A549 (cell line): ENCODE measurements at regions of chr15 and their contacts with region 1.

Region 1: GRCh38 chr15:22224241-22224671 is 143.9 kb downstream of the OR4M2 start:
- DNase-seq: peak in 1 of 2 experiments; percentile 78
- ATAC-seq: peak; percentile 41 to 49
- H3K4me3 ChIP-seq: no peak overlapping the region
- H3K27ac ChIP-seq: no peak overlapping the region
- H3K4me1 ChIP-seq: no peaks in the 10 kb centered on the region
- CTCF ChIP-seq: peak; percentile 43
- EP300 ChIP-seq: no peak
- POLR2A ChIP-seq: no peak
- RAD21 ChIP-seq: peak; percentile 59 to 62

Region 2: DNA sequence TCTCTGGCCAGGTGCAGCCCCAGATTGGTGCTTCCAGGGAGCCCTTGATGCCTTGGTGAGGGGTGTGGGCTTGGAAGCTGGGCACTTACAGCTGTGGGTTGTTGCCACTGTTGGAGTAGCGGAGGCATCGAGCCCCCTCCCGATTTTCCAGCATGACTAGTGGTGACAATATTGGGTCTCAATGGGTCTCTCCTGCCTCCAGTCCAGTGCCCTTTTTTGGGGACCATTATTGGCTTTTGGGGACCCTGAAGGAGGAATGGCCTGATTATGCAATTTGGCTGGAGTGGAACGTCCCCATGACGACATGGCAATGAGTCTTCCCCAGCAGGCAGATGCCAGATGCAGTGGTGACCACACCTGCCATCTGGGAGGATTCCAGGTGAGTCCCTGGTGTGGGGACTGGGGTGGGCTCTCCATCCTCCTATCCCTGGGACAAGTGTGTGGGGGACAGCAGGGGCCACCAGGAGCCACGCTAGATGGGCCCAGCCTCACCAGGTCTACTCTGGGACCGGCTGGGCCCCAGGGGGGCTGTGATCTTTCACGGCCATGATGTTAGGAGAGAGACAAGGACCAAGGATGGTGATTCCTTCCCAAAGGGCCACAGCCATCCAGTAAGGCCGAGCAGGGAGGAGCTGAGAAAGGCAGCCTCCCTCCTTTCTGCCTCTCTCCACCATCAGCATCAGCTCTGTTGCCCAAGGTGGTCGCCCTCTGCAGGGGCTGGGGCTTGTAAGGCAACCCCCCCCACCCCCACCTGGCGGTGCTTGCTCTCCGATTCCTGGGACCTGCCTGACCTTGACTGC is 1879.5 kb before region 1 on chr15:
- CTCF ChIA-PET with region 1: interaction called, 12 read pairs
- POLR2A ChIA-PET with region 1: no interaction called
- DNase-seq: peak in 1 of 2 experiments; percentile 6
- ATAC-seq: no peak
- H3K4me3 ChIP-seq: no peak overlapping the region
- H3K27ac ChIP-seq: no peak overlapping the region
- H3K4me1 ChIP-seq: no peaks in the 10 kb centered on the region
- CTCF ChIP-seq: no peak
- EP300 ChIP-seq: no peak
- POLR2A ChIP-seq: no peak
- RAD21 ChIP-seq: no peak

Region 3: DNA sequence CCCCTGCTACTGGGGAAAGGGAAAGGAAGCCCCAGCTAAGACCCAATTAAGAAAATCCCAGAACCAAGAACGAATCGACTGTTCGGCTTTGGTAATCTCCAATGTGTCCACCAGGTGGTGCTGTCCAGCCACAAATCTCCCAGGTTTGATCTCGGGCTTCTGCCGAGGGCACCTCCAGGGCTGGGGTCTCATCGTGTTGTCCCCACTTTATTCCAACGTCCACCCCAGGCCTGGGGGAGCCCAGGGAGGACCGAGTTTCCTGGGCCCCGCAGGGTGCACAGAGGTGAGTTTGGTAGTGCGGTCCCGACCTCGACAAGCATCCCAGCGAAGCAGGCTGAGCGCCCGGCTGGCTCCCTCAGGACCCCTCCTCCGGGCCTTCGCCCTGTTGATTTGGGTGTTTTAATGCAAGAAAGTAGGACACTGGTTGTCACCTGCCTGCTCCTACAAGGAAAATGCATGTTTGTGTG is 1867.8 kb before region 1 on chr15:
- CTCF ChIA-PET with region 1: interaction called, 136 read pairs
- POLR2A ChIA-PET with region 1: no interaction called
- DNase-seq: peak; percentile 77 to 80
- ATAC-seq: peak; percentile 30 to 84
- H3K4me3 ChIP-seq: no peak overlapping the region
- H3K27ac ChIP-seq: no peak overlapping the region
- H3K4me1 ChIP-seq: no peaks in the 10 kb centered on the region
- CTCF ChIP-seq: peak; percentile 90
- EP300 ChIP-seq: no peak
- POLR2A ChIP-seq: no peak
- RAD21 ChIP-seq: peak; percentile 97 to 98

Region 4: GRCh38 chr15:22239806-22240180 is 15.5 kb after region 1 on chr15:
- CTCF ChIA-PET with region 1: interaction called, 67 read pairs
- POLR2A ChIA-PET with region 1: no interaction called
- DNase-seq: no peak
- ATAC-seq: no peak
- H3K4me3 ChIP-seq: no peak overlapping the region
- H3K27ac ChIP-seq: no peak overlapping the region
- H3K4me1 ChIP-seq: peaks cover 13% of the 10 kb centered on the region; the same call in 2 of the 3 replicates
- CTCF ChIP-seq: no peak
- EP300 ChIP-seq: no peak
- POLR2A ChIP-seq: no peak
- RAD21 ChIP-seq: no peak